Activated naive CD4-positive, alpha-beta T cell treated with anti-CD3 and anti-CD28 coated beads for 36 hours (primary cell): ENCODE measurements at regions of chr5 and their contacts with region 1.

Region 1: GRCh38 chr5:134184155-134185135 is 7.7 kb upstream of the SKP1 start:
- DNase-seq: peak; percentile 88
- H3K4me3 Mint-ChIP-seq: no peak overlapping the region
- H3K27ac Mint-ChIP-seq: no peak overlapping the region
- H3K4me1 Mint-ChIP-seq: no peaks in the 10 kb centered on the region
- H3K27me3 Mint-ChIP-seq: no peaks in the 10 kb centered on the region

Region 2: GRCh38 chr5:133868946-133869518 is 315.4 kb before region 1 on chr5:
- CTCF ChIA-PET with region 1: no interaction called
- intact Hi-C with region 1: no loop called
- DNase-seq: peak; percentile 93
- H3K4me3 Mint-ChIP-seq: no peak overlapping the region
- H3K27ac Mint-ChIP-seq: peak overlapping the region; percentile 44
- H3K4me1 Mint-ChIP-seq: peaks cover 40% of the 10 kb centered on the region
- H3K27me3 Mint-ChIP-seq: no peaks in the 10 kb centered on the region

Region 3: GRCh38 chr5:134195666-134196065 is 11.2 kb after region 1 on chr5:
- CTCF ChIA-PET with region 1: interaction called, 16 read pairs
- intact Hi-C with region 1: no loop called
- DNase-seq: no peak
- H3K4me3 Mint-ChIP-seq: no peak overlapping the region
- H3K27ac Mint-ChIP-seq: no peak overlapping the region
- H3K4me1 Mint-ChIP-seq: no peaks in the 10 kb centered on the region
- H3K27me3 Mint-ChIP-seq: no peaks in the 10 kb centered on the region

Region 4: GRCh38 chr5:134289509-134290113 is 105.2 kb after region 1 on chr5:
- CTCF ChIA-PET with region 1: interaction called, 87 read pairs
- intact Hi-C with region 1: loop called (anchors 1 kb)
- DNase-seq: peak; percentile 56
- H3K4me3 Mint-ChIP-seq: no peak overlapping the region
- H3K27ac Mint-ChIP-seq: no peak overlapping the region
- H3K4me1 Mint-ChIP-seq: peaks cover 4% of the 10 kb centered on the region
- H3K27me3 Mint-ChIP-seq: no peaks in the 10 kb centered on the region